T-cell (primary cell): ENCODE measurements at regions of chr2 and their contacts with region 1.

Region 1: GRCh38 chr2:174522553-174522952 is 35.7 kb upstream of the GPR155 start:
- DNase-seq: peak in 1 of 35 experiments; percentile 31
- ATAC-seq: no peak
- H3K4me3 ChIP-seq: no peak overlapping the region
- H3K4me3 Mint-ChIP-seq: no peak overlapping the region
- H3K27ac ChIP-seq: no peak overlapping the region
- H3K27ac Mint-ChIP-seq: no peak overlapping the region
- H3K4me1 ChIP-seq: no peaks in the 10 kb centered on the region
- H3K4me1 Mint-ChIP-seq: peaks cover 13 to 16% (median 14%) of the 10 kb centered on the region in 3 donors
- H3K27me3 ChIP-seq: no peaks in the 10 kb centered on the region
- H3K27me3 Mint-ChIP-seq: no peaks in the 10 kb centered on the region

Region 2: GRCh38 chr2:174473796-174474195 is 48.8 kb before region 1 on chr2:
- CTCF ChIA-PET with region 1: interaction called in 1 of 2 experiments, 13 read pairs
- POLR2A ChIA-PET with region 1: no interaction called
- DNase-seq: no peak
- ATAC-seq: no peak
- H3K4me3 ChIP-seq: no peak overlapping the region
- H3K4me3 Mint-ChIP-seq: no peak overlapping the region
- H3K27ac ChIP-seq: no peak overlapping the region
- H3K27ac Mint-ChIP-seq: peak overlapping the region; percentile 46 to 52
- H3K4me1 ChIP-seq: no peaks in the 10 kb centered on the region
- H3K4me1 Mint-ChIP-seq: peaks cover 20 to 26% (median 23%) of the 10 kb centered on the region in 3 donors
- H3K27me3 ChIP-seq: no peaks in the 10 kb centered on the region
- H3K27me3 Mint-ChIP-seq: no peaks in the 10 kb centered on the region

Region 3: DNA sequence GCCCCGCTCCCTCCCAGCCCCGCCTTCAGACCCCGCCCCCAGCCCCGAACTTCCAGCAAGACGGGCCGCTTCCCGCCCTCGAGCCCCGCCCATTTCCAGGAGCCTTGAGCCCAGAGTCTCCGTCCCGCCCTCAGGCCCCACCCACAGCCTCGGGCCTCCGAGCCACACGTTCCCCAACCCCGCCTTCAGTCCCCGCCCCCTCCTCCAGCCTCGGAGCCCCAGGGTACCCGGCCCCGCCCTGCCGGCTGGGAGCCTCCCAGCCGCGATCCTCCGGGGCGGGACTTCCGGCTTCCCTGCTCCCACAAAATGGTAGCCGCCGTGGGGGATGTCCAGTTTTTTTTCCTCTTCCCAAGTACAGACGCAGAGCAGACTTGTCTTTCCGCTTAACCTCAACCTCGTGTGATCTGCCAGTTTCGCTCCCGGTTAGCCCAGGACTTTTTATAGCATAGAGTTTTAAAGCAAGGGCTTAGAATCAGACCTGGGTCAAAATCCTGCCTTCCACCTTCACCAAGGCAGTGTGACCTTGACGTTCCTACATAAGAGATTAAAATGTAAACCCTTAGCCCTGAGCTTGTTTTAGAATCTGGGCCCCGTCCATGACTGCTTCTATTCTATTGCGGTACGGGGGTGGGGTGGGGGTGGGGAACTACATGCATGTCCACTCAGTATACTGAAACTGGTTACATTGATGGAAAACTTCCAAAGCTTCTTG is 35.3 kb before region 1 on chr2:
- CTCF ChIA-PET with region 1: interaction called in 1 of 2 experiments, 11 read pairs
- POLR2A ChIA-PET with region 1: interaction called, 3 read pairs
- DNase-seq: peak; percentile 72 to 99 (median 86)
- ATAC-seq: peak; percentile 82 to 87 (median 85)
- H3K4me3 ChIP-seq: peak overlapping the region; percentile 65 to 88
- H3K4me3 Mint-ChIP-seq: peak overlapping the region; percentile 91 to 98 (median 94)
- H3K27ac ChIP-seq: peak overlapping the region; percentile 76
- H3K27ac Mint-ChIP-seq: peak overlapping the region; percentile 92 to 95
- H3K4me1 ChIP-seq: peaks cover 34 to 39% of the 10 kb centered on the region in 2 experiments
- H3K4me1 Mint-ChIP-seq: peaks cover 66 to 76% (median 72%) of the 10 kb centered on the region in 3 donors
- H3K27me3 ChIP-seq: no peaks in the 10 kb centered on the region
- H3K27me3 Mint-ChIP-seq: no peaks in the 10 kb centered on the region